A673 (cell line): ENCODE measurements at regions of chr4 and their contacts with region 1.

Region 1: DNA sequence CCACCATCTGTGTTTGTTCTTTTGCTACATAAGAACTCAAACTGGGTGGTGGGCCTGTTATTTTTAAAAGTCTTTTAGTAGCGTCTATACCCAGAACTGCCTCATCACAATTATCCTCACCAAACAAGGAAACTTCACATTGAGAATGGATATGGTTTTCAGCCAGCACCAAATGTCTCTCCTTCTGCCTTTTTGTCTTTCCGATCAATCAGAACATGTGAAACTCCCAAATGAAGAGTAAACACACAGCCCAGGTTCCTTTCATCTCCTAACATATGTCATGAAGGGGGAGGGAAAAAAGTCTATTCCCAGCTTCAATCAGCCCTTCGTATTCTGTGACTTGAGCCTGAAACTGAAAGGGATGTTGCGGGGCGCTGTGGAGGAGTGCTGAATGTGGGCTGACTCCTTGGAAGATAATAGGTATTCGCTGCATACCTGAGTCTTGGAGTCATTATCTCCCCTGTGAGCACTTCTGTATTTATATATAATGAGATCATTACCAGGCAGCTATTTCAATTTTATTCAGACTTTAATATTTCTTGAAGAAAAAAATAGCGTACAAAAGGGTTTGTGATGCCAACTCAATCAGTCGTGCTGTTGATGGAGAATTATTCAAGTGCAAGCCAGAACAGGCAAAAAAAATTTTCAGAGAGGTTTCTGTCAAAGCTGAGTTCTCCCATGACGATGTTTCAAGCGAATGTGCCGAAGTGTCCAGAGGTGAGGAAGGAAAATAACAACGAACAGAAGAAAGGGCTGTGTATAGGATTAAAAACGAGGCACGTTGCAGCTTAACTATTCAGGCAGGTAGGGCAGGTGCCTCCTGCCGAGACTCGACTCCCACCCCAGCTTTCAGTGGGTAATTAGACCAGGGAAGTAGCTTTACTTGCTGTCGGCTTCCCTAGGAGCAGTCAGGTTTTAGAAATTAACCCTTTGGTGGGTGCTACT is 163.9 kb upstream of the NOCT start:
- DNase-seq: no peak
- H3K4me3 ChIP-seq: no peak overlapping the region
- H3K27ac ChIP-seq: no peak overlapping the region
- H3K4me1 ChIP-seq: no peaks in the 10 kb centered on the region
- H3K27me3 ChIP-seq: no peaks in the 10 kb centered on the region
- CTCF ChIP-seq: no peak

Region 2: DNA sequence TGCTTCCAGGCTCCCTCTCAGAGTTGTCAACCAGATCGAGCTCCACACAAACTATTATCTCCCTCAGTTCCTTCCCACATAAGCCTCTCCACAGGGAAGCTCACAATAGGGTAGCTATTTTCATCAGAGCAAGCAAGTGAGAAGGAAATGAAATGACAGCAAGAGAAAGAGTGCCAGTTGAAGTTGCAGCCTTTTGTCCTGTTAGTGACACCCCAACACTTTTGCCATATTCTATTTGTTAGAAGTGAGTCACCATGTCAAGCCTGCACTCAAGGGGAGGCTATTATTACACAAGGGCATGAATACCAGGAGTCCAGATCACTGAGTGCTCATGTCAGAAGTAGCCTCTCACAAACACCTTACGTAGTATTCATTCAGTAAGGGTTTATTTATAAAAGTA is 102.4 kb before region 1 on chr4:
- CTCF ChIA-PET with region 1: no interaction called
- POLR2A ChIA-PET with region 1: interaction called, 10 read pairs
- intact Hi-C with region 1: no loop called
- DNase-seq: peak; percentile 48
- H3K4me3 ChIP-seq: no peak overlapping the region
- H3K27ac ChIP-seq: no peak overlapping the region
- H3K4me1 ChIP-seq: no peaks in the 10 kb centered on the region
- H3K27me3 ChIP-seq: no peaks in the 10 kb centered on the region
- CTCF ChIP-seq: no peak

Region 3: DNA sequence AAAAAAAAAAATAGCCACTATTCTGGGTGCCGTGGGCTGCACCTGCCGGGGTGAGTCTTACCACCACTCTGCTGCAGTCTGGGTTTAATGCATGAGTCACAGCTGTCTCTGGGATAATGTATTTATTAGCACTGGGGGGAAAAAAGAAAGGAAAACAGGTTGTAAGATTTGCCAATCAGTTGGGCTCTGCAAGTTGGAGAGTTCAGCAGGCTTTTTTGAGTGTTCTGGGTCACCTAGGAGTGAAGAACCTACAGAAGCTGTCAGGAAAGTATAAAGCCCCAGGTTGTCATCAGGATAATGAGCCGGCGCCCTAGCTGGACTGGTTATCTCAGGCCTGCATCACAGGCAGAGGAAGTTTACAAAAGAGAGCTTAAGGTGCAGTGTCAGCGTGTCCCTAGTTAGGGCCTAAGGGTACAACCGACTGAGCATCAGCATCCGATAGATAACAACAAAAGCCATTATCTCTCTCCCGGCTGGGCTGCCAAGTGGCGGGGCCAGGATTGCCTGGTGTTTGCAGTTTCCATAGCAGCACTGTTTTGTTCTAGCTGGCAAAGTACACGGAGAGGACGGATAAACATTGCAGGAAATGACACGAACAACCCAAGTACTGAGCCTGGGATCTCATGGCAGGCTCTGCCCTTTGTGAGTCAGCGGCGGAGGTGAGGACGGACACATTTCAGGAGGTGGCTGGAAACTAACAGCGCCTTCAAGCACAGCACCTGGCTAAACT is 59.1 kb after region 1 on chr4:
- CTCF ChIA-PET with region 1: no interaction called
- POLR2A ChIA-PET with region 1: no interaction called
- intact Hi-C with region 1: no loop called
- DNase-seq: no peak
- H3K4me3 ChIP-seq: no peak overlapping the region
- H3K27ac ChIP-seq: no peak overlapping the region
- H3K4me1 ChIP-seq: no peaks in the 10 kb centered on the region
- H3K27me3 ChIP-seq: no peaks in the 10 kb centered on the region
- CTCF ChIP-seq: no peak